Naive thymus-derived CD8-positive, alpha-beta T cell (primary cell): ENCODE measurements at regions of chr19 and their contacts with region 1.

Region 1: DNA sequence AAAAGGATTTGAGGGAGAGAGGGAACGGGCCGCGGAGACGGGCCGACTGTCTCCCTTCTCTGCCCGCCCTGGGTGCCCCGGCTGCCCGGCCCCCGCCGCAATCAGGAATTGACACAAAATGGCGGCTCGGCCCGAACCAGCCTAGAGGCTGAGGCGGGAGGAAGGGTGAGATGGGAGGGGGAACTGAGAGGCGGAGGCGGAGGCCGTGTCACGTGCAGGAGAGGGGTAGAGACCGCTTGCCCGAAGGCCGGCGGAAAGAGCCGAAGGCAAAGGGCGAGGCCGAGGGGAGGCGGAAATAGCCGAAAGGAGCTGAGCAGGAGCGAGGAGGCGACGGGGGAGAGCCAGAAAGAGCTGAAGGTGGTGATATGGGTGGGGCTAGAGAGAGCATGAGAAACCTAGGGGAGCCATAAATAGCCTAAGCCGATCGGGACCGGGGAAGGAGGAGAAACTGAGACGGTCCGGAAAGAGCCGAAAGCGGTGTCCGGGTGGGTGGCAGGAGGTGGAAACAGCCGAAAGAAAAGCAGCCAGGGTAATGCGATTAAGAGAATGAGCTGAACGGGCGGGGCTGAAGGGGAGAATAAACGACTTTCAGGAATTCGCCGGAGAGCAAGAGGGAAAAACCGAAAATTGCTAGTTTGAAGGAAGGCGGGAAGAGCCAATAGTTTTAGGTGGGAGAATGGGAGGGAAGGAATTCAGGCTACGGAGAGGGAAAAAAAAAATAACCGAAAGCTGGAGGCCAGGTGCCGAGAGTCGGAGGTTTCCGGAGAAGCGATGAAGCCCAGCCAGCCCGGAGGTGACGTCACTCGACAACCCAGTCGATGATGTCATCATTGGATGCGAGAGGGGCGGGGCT is at the start of gene ZC3H4:
- DNase-seq: peak; percentile 97 to 100 (median 100)
- ATAC-seq: peak; percentile 81 to 84
- H3K4me3 Mint-ChIP-seq: peak within 1 kb of the TSS; percentile 92 to 100 (median 98)
- H3K27ac Mint-ChIP-seq: peak within 1 kb of the TSS; percentile 99 to 100 (median 99)
- H3K4me1 Mint-ChIP-seq: peaks cover 17 to 39% (median 33%) of the 10 kb centered on the region in 4 donors
- H3K27me3 Mint-ChIP-seq: peaks cover 0 to 2% (median 0%) of the 10 kb centered on the region in 5 donors
- polyA plus RNA-seq, gene ZC3H4: 0.86 to 2.4 (median 2.0) TPM

Region 2: GRCh38 chr19:46990991-46991676 is 122.1 kb before region 1 on chr19:
- POLR2A ChIA-PET with region 1: no interaction called
- DNase-seq: peak in 9 of 10 donors; percentile 18 to 71 (median 38)
- ATAC-seq: peak; percentile 42 to 44
- H3K4me3 Mint-ChIP-seq: no peak overlapping the region
- H3K27ac Mint-ChIP-seq: peak overlapping the region in 3 of 10 donors; percentile 10 to 22 (median 18)
- H3K4me1 Mint-ChIP-seq: peaks cover 0 to 15% (median 12%) of the 10 kb centered on the region in 4 donors
- H3K27me3 Mint-ChIP-seq: no peaks in the 10 kb centered on the region

Region 3: GRCh38 chr19:47002107-47002766 is 111.0 kb before region 1 on chr19:
- POLR2A ChIA-PET with region 1: no interaction called
- DNase-seq: no peak
- ATAC-seq: no peak
- H3K4me3 Mint-ChIP-seq: no peak overlapping the region
- H3K27ac Mint-ChIP-seq: no peak overlapping the region
- H3K4me1 Mint-ChIP-seq: peaks cover 0 to 15% (median 12%) of the 10 kb centered on the region in 4 donors
- H3K27me3 Mint-ChIP-seq: peaks cover 0 to 8% (median 2%) of the 10 kb centered on the region in 5 donors

Region 4: DNA sequence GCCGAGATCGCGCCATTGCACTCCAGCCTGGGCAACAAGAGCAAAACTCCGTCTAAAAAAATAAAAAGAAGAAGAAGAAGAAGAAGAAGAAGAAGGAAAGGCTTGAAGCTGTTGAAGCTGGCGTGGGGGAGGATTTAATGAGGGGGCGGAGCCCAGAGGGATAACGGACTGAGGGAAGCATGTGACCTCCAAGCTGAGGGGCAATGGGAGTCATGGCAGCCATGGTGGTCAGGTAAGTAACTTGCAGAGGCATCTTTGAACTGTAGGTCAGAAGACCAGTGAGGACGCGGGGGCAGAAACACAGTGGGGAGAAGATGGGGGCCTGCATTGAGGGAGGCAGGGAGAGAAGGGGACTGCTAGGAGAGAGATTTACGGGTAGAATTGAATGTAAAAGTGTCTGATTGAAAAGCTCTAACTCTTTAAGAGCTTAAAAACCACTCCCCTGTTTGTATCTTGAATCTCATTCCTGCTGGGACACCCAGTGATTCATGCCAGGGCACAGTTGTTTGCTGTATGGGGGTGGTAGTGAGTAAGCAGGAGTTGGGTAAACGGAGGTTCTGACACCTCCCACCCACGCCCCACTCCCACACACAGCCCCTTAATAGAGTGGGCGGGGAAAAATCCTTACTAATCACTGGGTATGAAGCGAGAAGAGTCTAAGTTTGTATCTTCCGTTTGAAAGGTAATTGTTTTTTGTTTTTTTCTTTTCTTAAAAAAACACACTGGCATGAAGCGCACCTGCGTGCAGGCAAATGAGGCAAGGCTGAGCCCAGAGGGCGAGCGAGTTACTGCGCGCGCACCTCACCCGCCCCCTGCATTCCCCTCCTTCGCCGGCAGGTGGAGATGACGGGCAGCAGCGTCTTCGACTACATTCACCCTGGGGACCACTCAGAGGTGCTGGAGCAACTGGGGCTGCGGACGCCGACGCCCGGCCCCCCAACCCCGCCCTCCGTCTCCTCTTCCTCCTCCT is 77.8 kb before region 1 on chr19:
- POLR2A ChIA-PET with region 1: interaction called, 12 read pairs
- DNase-seq: peak; percentile 92 to 100 (median 96)
- ATAC-seq: peak; percentile 92 to 95
- H3K4me3 Mint-ChIP-seq: peak overlapping the region; percentile 80 to 96 (median 92)
- H3K27ac Mint-ChIP-seq: peak overlapping the region; percentile 46 to 91 (median 86)
- H3K4me1 Mint-ChIP-seq: peaks cover 10 to 23% (median 16%) of the 10 kb centered on the region in 4 donors
- H3K27me3 Mint-ChIP-seq: peaks cover 3 to 20% (median 4%) of the 10 kb centered on the region in 5 donors

Region 5: GRCh38 chr19:47081111-47081510 is 32.1 kb before region 1 on chr19:
- POLR2A ChIA-PET with region 1: interaction called, 49 read pairs
- DNase-seq: no peak
- ATAC-seq: no peak
- H3K4me3 Mint-ChIP-seq: no peak overlapping the region
- H3K27ac Mint-ChIP-seq: peak overlapping the region in 1 of 10 donors; percentile 82
- H3K4me1 Mint-ChIP-seq: peaks cover 0 to 2% (median 0%) of the 10 kb centered on the region in 4 donors
- H3K27me3 Mint-ChIP-seq: no peaks in the 10 kb centered on the region

Region 6: DNA sequence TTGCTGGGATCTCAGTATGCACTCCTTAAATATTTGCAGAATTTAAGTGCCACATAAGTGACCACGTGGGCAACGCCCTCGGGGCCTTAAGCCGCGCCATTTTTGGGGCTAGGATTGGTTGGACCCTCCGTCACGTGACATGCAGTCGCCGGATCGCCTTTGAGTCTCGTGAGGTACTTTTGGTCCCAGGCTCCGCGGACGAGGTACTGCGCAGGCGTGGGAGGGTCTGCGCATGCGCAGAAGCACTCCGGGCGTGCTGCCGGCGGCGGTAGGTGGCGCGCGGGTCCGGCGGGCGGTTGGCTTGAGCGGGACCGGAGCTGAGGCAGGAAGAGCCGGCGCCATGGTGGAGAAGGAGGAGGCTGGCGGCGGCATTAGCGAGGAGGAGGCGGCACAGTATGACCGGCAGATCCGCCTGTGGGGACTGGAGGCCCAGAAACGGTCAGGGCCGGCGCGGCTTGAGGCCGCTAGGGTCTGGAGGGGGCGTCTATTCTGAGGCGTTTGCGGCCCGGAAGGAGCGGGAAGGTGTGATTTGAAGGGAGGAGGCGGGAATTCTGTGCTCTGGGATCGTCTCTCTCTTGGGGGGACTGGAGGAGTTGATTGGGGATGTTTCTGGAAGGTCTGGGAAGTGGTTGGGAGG is 17.5 kb after region 1 on chr19 and contains the start of gene SAE1:
- POLR2A ChIA-PET with region 1: interaction called, 34 read pairs
- DNase-seq: peak; percentile 80 to 98 (median 90)
- ATAC-seq: peak; percentile 90 to 93
- H3K4me3 Mint-ChIP-seq: peak within 1 kb of the TSS; percentile 97 to 100 (median 99)
- H3K27ac Mint-ChIP-seq: peak within 1 kb of the TSS; percentile 92 to 98 (median 94)
- H3K4me1 Mint-ChIP-seq: peaks cover 35 to 58% (median 54%) of the 10 kb centered on the region in 4 donors
- H3K27me3 Mint-ChIP-seq: peaks cover 0 to 4% (median 0%) of the 10 kb centered on the region in 5 donors
- polyA plus RNA-seq, gene SAE1: 158 to 174 (median 159) TPM

Region 7: GRCh38 chr19:47168065-47168464 is 54.8 kb after region 1 on chr19:
- POLR2A ChIA-PET with region 1: no interaction called
- DNase-seq: no peak
- ATAC-seq: no peak
- H3K4me3 Mint-ChIP-seq: no peak overlapping the region
- H3K27ac Mint-ChIP-seq: peak overlapping the region in 3 of 10 donors; percentile 4 to 31 (median 19)
- H3K4me1 Mint-ChIP-seq: peaks cover 11 to 48% (median 21%) of the 10 kb centered on the region in 4 donors
- H3K27me3 Mint-ChIP-seq: no peaks in the 10 kb centered on the region

Region 8: GRCh38 chr19:47190167-47190727 is 77.0 kb after region 1 on chr19:
- POLR2A ChIA-PET with region 1: interaction called, 19 read pairs
- DNase-seq: peak; percentile 19 to 69 (median 43)
- ATAC-seq: peak; percentile 29 to 44
- H3K4me3 Mint-ChIP-seq: peak overlapping the region in 9 of 10 donors; percentile 44 to 82 (median 64)
- H3K27ac Mint-ChIP-seq: peak overlapping the region; percentile 0 to 99 (median 96)
- H3K4me1 Mint-ChIP-seq: peaks cover 27 to 81% (median 67%) of the 10 kb centered on the region in 4 donors
- H3K27me3 Mint-ChIP-seq: no peaks in the 10 kb centered on the region

Region 9: GRCh38 chr19:47273313-47273977 is 160.2 kb after region 1 on chr19:
- POLR2A ChIA-PET with region 1: interaction called, 16 read pairs
- DNase-seq: peak; percentile 80 to 94 (median 87)
- ATAC-seq: peak; percentile 69
- H3K4me3 Mint-ChIP-seq: peak overlapping the region; percentile 86 to 99 (median 97)
- H3K27ac Mint-ChIP-seq: peak overlapping the region; percentile 88 to 99 (median 98)
- H3K4me1 Mint-ChIP-seq: peaks cover 21 to 39% (median 27%) of the 10 kb centered on the region in 4 donors
- H3K27me3 Mint-ChIP-seq: no peaks in the 10 kb centered on the region